HCT116 (cell line): ENCODE measurements at regions of chr14 and their contacts with region 1.

Region 1: GRCh38 chr14:60266021-60266937 is 17.3 kb downstream of the PPM1A start:
- DNase-seq: peak; percentile 27
- ATAC-seq: peak; percentile 67
- H3K4me3 ChIP-seq: no peak overlapping the region
- H3K27ac ChIP-seq: no peak overlapping the region
- H3K4me1 ChIP-seq: no peaks in the 10 kb centered on the region
- H3K27me3 ChIP-seq: no peaks in the 10 kb centered on the region
- CTCF ChIP-seq: peak; percentile 27 to 75 (median 66); a peak in 5 of 6 replicates
- POLR2A ChIP-seq: no peak
- RAD21 ChIP-seq: peak; percentile 49

Region 2: GRCh38 chr14:60248697-60249318 is 17.5 kb before region 1 on chr14 and contains the start of gene PPM1A:
- CTCF ChIA-PET with region 1: interaction called, 12 read pairs
- POLR2A ChIA-PET with region 1: interaction called, 4 read pairs
- RAD21 ChIA-PET with region 1: no interaction called
- intact Hi-C with region 1: no loop called
- DNase-seq: peak; percentile 84
- ATAC-seq: peak; percentile 75
- H3K4me3 ChIP-seq: peak within 1 kb of the TSS; percentile 74 to 77
- H3K27ac ChIP-seq: peak within 1 kb of the TSS; percentile 92
- H3K4me1 ChIP-seq: peaks cover 9 to 31% of the 10 kb centered on the region in 2 experiments
- H3K27me3 ChIP-seq: no peaks in the 10 kb centered on the region
- CTCF ChIP-seq: no peak
- POLR2A ChIP-seq: peak; percentile 82
- RAD21 ChIP-seq: no peak
- total RNA-seq, gene PPM1A: 32.8 TPM

Region 3: GRCh38 chr14:60254176-60254575 is 12.1 kb before region 1 on chr14:
- CTCF ChIA-PET with region 1: interaction called, 20 read pairs
- POLR2A ChIA-PET with region 1: interaction called, 4 read pairs
- RAD21 ChIA-PET with region 1: no interaction called
- intact Hi-C with region 1: no loop called
- DNase-seq: no peak
- ATAC-seq: no peak
- H3K4me3 ChIP-seq: no peak overlapping the region
- H3K27ac ChIP-seq: no peak overlapping the region
- H3K4me1 ChIP-seq: peaks cover 0 to 13% of the 10 kb centered on the region in 2 experiments; a peak in 3 of 4 replicates
- H3K27me3 ChIP-seq: no peaks in the 10 kb centered on the region
- CTCF ChIP-seq: no peak
- POLR2A ChIP-seq: no peak
- RAD21 ChIP-seq: no peak

Region 4: DNA sequence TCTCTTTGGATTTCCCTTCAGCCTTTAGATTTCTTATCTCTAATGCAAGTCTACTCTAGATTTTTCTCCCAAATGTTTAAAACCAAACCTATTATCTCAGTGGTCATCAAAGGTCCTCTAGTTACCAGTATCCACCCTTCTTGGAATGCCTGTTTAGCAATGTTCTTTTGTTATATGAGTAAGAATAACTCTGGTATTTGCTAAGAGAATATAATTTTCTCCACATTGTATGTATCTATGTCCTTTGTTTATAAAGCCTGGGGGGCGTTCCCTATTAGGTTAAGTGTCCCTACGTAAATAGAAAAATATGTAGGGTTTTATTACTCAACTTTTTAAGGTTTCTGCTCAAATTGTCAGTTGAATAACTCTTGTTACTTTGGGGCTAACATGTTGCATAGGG is 10.1 kb after region 1 on chr14:
- CTCF ChIA-PET with region 1: interaction called, 13 read pairs
- POLR2A ChIA-PET with region 1: no interaction called
- RAD21 ChIA-PET with region 1: no interaction called
- intact Hi-C with region 1: no loop called
- DNase-seq: no peak
- ATAC-seq: no peak
- H3K4me3 ChIP-seq: no peak overlapping the region
- H3K27ac ChIP-seq: no peak overlapping the region
- H3K4me1 ChIP-seq: no peaks in the 10 kb centered on the region
- H3K27me3 ChIP-seq: no peaks in the 10 kb centered on the region
- CTCF ChIP-seq: no peak
- POLR2A ChIP-seq: no peak
- RAD21 ChIP-seq: no peak

Region 5: DNA sequence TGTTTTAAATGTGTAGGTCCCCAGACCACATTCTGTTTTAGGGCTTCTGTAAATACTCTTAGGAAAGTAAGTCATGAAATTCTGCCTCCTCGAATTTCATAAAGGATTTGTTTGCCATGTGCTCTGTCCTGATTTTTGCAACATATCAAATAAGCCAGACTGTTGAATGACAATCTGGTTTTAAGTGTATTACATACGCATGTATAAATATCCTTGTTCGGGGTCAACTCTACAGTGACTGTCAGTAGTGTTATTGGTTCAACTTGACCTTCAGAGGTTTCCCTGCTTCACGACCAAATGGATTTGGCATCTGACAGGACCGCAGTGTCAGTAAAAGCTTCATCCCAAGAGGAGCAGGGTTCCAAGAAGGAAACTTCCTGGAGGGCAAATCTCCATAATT is 35.4 kb after region 1 on chr14:
- CTCF ChIA-PET with region 1: interaction called, 11 read pairs
- POLR2A ChIA-PET with region 1: no interaction called
- RAD21 ChIA-PET with region 1: no interaction called
- intact Hi-C with region 1: no loop called
- DNase-seq: no peak
- ATAC-seq: no peak
- H3K4me3 ChIP-seq: no peak overlapping the region
- H3K27ac ChIP-seq: no peak overlapping the region
- H3K4me1 ChIP-seq: no peaks in the 10 kb centered on the region
- H3K27me3 ChIP-seq: no peaks in the 10 kb centered on the region
- CTCF ChIP-seq: no peak
- POLR2A ChIP-seq: no peak
- RAD21 ChIP-seq: no peak

Region 6: DNA sequence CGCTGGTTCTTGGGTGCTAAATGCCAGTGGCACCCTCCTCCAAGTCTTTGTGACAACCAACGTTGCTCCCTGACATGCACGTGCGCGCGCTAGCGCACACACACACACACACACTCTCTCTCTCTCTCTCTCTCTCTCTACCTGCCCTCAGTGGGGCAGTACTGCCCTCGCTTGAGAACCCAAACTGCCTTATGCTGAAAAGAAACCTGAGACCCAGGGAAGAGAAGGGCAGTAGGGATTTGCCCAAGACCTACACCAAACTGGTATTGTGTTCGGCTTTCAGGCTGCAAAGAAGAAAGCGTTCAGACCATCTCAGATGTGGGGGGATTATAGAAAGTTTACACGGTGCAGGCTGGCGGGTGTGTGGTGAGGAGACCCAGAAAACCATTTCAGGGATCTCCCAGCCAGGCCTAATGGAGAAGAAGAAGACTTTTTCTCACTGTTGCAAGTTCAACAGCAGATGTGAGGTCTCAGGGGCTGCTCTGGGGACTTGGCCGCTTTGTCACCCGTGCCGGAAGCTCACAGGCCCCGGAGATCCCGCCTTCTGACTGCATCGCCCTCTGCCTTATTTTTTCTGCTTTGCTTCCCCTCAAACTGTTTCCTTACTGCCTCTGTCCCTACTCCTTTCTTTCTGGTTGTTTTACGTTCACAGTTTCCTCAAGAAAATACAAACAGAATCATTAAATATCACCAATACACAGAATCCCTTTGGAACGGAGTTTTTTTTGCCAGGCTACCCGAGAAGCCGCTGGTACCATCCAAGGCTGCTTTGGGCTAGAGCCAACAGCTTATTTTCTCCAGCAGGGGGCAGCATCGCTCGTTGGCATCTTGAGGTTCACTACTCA is 65.1 kb after region 1 on chr14:
- CTCF ChIA-PET with region 1: interaction called, 16 read pairs
- POLR2A ChIA-PET with region 1: no interaction called
- RAD21 ChIA-PET with region 1: no interaction called
- intact Hi-C with region 1: loop called (anchors 5 kb)
- DNase-seq: peak; percentile 67
- ATAC-seq: peak; percentile 86
- H3K4me3 ChIP-seq: peak overlapping the region; percentile 47 to 55
- H3K27ac ChIP-seq: peak overlapping the region; percentile 56
- H3K4me1 ChIP-seq: peaks cover 3 to 11% of the 10 kb centered on the region in 2 experiments; a peak in 2 of 4 replicates
- H3K27me3 ChIP-seq: no peaks in the 10 kb centered on the region
- CTCF ChIP-seq: peak; percentile 69 to 91 (median 80); a peak in 5 of 6 replicates
- POLR2A ChIP-seq: no peak
- RAD21 ChIP-seq: peak; percentile 63

Region 7: GRCh38 chr14:60561845-60562746 is 295.8 kb after region 1 on chr14:
- CTCF ChIA-PET with region 1: interaction called, 12 read pairs
- POLR2A ChIA-PET with region 1: no interaction called
- RAD21 ChIA-PET with region 1: interaction called in 1 of 2 experiments, 3 read pairs
- intact Hi-C with region 1: loop called (anchors 5 kb)
- DNase-seq: peak; percentile 81
- ATAC-seq: peak; percentile 97
- H3K4me3 ChIP-seq: no peak overlapping the region
- H3K27ac ChIP-seq: no peak overlapping the region
- H3K4me1 ChIP-seq: peaks cover 0 to 4% of the 10 kb centered on the region in 2 experiments; a peak in 1 of 4 replicates
- H3K27me3 ChIP-seq: no peaks in the 10 kb centered on the region
- CTCF ChIP-seq: peak; percentile 80 to 96 (median 89)
- POLR2A ChIP-seq: no peak
- RAD21 ChIP-seq: peak; percentile 91